Activated CD8-positive, alpha-beta T cell treated with anti-CD3 and anti-CD28 coated beads, Interleukin-2, amount 10 ng/mL, durations not matched to agents 7 days and 5 days (primary cell): ENCODE measurements at regions of chr2 and their contacts with region 1.

Region 1: GRCh38 chr2:157443795-157444640 is at the start of gene CYTIP:
- DNase-seq: peak; percentile 87
- ATAC-seq: peak; percentile 45
- H3K4me3 Mint-ChIP-seq: peak within 1 kb of the TSS; percentile 94
- H3K27ac Mint-ChIP-seq: peak within 1 kb of the TSS; percentile 92
- H3K4me1 Mint-ChIP-seq: peaks cover 33% of the 10 kb centered on the region
- H3K27me3 Mint-ChIP-seq: no peaks in the 10 kb centered on the region
- total RNA-seq, gene CYTIP: 222 to 227 TPM

Region 2: DNA sequence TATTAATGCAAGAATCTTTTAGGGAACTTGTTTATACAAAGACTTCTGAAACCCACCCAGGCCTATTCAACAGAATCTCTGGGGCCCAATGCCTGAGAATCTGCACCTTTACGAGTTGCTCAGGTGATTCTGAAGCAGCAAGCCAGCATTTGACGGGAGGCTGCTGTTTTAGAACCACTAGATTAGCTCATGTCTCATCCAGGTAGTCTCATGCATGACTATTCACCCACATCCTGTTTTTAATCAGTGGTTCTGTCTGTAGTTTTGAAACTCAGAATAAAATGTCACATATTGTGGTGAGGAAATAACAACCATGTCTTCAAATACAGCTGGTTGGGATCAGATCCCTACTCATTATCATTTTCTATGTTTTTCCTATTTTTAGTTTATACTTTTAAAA is 39.7 kb before region 1 on chr2:
- CTCF ChIA-PET with region 1: interaction called, 3 read pairs
- POLR2A ChIA-PET with region 1: interaction called, 14 read pairs
- DNase-seq: peak; percentile 78
- ATAC-seq: peak; percentile 97
- H3K4me3 Mint-ChIP-seq: peak overlapping the region; percentile 15
- H3K27ac Mint-ChIP-seq: peak overlapping the region; percentile 84
- H3K4me1 Mint-ChIP-seq: peaks cover 70% of the 10 kb centered on the region
- H3K27me3 Mint-ChIP-seq: no peaks in the 10 kb centered on the region

Region 3: GRCh38 chr2:157420771-157421323 is 23.2 kb before region 1 on chr2:
- CTCF ChIA-PET with region 1: interaction called, 9 read pairs
- POLR2A ChIA-PET with region 1: interaction called, 144 read pairs
- DNase-seq: no peak
- ATAC-seq: peak; percentile 10
- H3K4me3 Mint-ChIP-seq: peak overlapping the region; percentile 45
- H3K27ac Mint-ChIP-seq: peak overlapping the region; percentile 81
- H3K4me1 Mint-ChIP-seq: peaks cover 75% of the 10 kb centered on the region
- H3K27me3 Mint-ChIP-seq: no peaks in the 10 kb centered on the region

Region 4: DNA sequence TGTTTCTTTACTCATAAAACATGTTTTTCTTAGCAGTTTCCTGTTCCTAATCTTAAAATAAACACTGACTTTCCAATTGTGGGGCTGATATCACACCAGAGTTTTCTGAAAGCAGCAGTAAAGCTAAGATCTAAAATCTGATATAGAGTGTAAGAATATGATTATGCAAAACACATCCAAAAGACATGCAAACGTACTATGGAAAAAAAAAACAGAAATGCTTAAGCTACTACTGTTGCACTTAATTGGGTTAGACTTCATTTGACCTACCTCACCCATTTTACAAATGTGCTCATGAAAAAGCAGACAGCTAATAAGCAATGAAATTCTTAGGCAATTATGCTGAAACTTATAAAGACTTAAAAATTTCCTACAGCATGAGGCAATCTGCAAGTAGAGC is 10.6 kb before region 1 on chr2:
- CTCF ChIA-PET with region 1: interaction called, 10 read pairs
- POLR2A ChIA-PET with region 1: interaction called, 98 read pairs
- DNase-seq: no peak
- ATAC-seq: peak; percentile 15
- H3K4me3 Mint-ChIP-seq: peak overlapping the region; percentile 94
- H3K27ac Mint-ChIP-seq: peak overlapping the region; percentile 86
- H3K4me1 Mint-ChIP-seq: peaks cover 77% of the 10 kb centered on the region
- H3K27me3 Mint-ChIP-seq: no peaks in the 10 kb centered on the region

Region 5: DNA sequence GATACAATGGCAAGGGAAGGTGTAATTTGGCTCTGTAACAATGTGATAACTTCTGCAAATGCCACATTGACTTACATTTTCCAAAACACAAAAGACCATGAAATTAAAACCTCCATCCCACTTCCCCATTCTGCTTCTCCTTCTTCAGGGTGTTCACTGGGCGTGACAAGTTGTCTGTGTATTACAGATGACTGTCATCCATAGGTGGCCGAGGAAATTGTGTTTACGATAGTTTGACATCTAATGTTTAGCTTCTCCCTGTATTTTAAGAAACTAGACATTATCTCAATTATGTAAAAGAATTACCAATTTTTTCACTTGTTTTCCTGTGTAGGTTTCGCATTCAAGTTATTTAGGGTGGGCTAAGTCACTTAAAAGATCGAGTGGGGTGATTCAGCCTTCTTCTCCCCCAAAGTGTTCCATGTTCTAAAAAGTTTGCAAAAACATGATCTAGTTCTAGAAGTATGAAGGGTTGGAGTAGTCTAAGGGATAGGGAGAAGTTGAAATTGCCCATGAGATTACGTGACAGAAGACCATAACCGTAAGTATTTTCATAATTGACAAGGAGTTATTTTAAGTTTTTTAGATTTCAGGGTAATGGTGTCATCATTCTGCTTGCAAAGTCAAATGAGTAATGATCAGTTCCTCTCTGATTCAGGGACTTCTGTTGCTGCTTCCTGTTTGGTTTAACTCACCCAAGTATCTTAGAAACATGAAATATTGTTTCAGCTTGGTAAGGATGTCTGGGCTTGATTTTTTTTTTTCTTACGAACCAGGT is 25.1 kb after region 1 on chr2:
- CTCF ChIA-PET with region 1: interaction called, 40 read pairs
- POLR2A ChIA-PET with region 1: interaction called, 258 read pairs
- DNase-seq: no peak
- ATAC-seq: peak; percentile 76
- H3K4me3 Mint-ChIP-seq: peak overlapping the region; percentile 72
- H3K27ac Mint-ChIP-seq: peak overlapping the region; percentile 99
- H3K4me1 Mint-ChIP-seq: peaks cover 96% of the 10 kb centered on the region
- H3K27me3 Mint-ChIP-seq: no peaks in the 10 kb centered on the region

Region 6: GRCh38 chr2:157486596-157487270 is 42.7 kb after region 1 on chr2:
- CTCF ChIA-PET with region 1: interaction called, 17 read pairs
- POLR2A ChIA-PET with region 1: interaction called, 123 read pairs
- DNase-seq: no peak
- ATAC-seq: no peak
- H3K4me3 Mint-ChIP-seq: peak overlapping the region; percentile 35
- H3K27ac Mint-ChIP-seq: peak overlapping the region; percentile 61
- H3K4me1 Mint-ChIP-seq: peaks cover 76% of the 10 kb centered on the region
- H3K27me3 Mint-ChIP-seq: no peaks in the 10 kb centered on the region